CD14-positive monocyte (primary cell): ENCODE measurements at regions of chr7 and their contacts with region 1.

Region 1: DNA sequence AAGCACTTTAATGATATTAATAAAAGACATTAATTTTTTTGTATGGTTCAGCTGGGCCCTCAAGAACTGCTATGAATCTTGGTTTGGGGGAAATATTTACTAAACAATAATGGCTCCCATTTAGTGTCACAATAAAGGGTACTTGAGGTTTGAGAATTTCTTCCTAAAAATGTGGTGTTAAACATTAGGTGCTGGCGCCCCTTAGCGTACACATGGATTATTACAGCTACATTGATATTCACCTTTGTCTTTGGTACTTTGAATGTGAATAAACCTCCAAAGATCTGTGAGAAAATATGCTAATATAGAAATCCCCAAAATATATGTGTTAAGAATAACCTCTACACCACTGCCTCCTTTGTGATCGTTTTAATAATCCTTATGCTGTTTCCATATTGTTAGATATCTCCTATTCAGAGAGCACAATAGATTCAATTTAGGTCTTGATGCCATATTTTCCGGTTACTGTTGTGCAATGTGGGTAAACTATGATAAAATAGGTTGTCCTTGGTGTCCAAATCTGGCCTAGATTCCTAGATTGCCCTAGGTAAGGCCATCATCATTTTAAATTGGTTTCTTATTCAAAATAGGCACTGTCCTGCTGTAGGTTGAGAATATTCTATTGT is 161.8 kb upstream of the CACNA2D1 start:
- DNase-seq: peak; percentile 12 to 53 (median 40)
- H3K4me3 ChIP-seq: no peak overlapping the region
- H3K4me3 Mint-ChIP-seq: no peak overlapping the region
- H3K27ac ChIP-seq: no peak overlapping the region
- H3K27ac Mint-ChIP-seq: no peak overlapping the region
- H3K4me1 ChIP-seq: no peaks in the 10 kb centered on the region
- H3K4me1 Mint-ChIP-seq: no peaks in the 10 kb centered on the region
- H3K27me3 ChIP-seq: no peaks in the 10 kb centered on the region
- H3K27me3 Mint-ChIP-seq: peaks cover 1 to 3% (median 2%) of the 10 kb centered on the region in 3 donors
- CTCF ChIP-seq: peak; percentile 88

Region 2: GRCh38 chr7:82044497-82045080 is 560.8 kb before region 1 on chr7:
- intact Hi-C with region 1: loop called (anchors 10 kb)
- DNase-seq: peak; percentile 3 to 19 (median 11)
- H3K4me3 ChIP-seq: no peak overlapping the region
- H3K4me3 Mint-ChIP-seq: no peak overlapping the region
- H3K27ac ChIP-seq: no peak overlapping the region
- H3K27ac Mint-ChIP-seq: no peak overlapping the region
- H3K4me1 ChIP-seq: no peaks in the 10 kb centered on the region
- H3K4me1 Mint-ChIP-seq: no peaks in the 10 kb centered on the region
- H3K27me3 ChIP-seq: no peaks in the 10 kb centered on the region
- H3K27me3 Mint-ChIP-seq: peaks cover 0 to 5% (median 0%) of the 10 kb centered on the region in 3 donors
- CTCF ChIP-seq: peak; percentile 80